ENCODE measurements at regions of chr1 and their contacts with region 1.

Region 1: GRCh38 chr1:28668191-28668955 is at the start of gene GMEB1:
- H3K4me3 ChIP-seq: peak within 1 kb of the TSS; percentile 75
- H3K27ac ChIP-seq: peak within 1 kb of the TSS; percentile 95
- H3K4me1 ChIP-seq: peaks cover 4% of the 10 kb centered on the region; the same call in 1 of the 2 replicates
- CTCF ChIP-seq: no peak

Region 2: DNA sequence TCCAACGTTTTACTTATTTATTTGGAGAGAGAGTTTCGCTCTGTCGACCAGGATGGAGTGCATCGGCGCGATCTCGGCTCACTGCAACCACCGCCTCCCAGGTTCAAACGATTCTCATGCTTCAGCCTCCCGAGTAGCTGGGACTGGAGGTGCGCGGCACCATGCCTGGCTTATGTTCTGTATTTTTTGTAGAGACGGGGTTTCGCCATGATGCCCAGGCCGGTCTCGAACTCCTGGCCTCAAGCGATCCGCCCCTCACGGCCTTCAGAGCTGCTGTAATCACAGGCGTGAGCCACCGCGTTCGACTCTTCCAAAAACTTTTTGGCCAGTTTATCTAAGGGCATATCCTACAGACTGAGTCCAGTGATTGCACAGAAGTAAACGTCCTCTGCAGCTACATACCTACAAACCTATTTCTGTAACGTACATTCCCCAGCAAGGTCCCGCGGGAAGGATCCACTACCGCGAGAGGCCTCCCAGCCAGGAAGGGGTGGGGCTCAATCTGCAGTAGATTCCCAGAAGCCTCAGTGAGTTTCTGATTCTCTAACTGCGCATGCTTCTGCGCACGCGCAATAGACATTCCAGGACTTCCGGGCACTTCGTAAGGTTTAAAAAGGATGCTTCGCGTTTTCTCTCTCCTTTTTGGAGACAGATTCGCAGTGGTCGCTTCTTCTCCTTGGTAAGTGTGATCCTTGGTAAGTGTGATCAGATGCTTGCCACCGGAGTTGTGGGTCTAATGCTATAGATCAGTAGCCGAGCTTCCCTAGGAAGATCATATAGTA is 162.8 kb before region 1 on chr1 and contains the start of gene RCC1:
- CTCF ChIA-PET with region 1: no interaction called
- POLR2A ChIA-PET with region 1: no interaction called
- H3K4me3 ChIP-seq: peak within 1 kb of the TSS; percentile 79
- H3K27ac ChIP-seq: peak within 1 kb of the TSS; percentile 86
- H3K4me1 ChIP-seq: no peaks in the 10 kb centered on the region; the same call in 1 of the 2 replicates
- CTCF ChIP-seq: no peak

Region 3: GRCh38 chr1:28642847-28643635 is 25.3 kb before region 1 on chr1 and contains the start of gene TAF12:
- CTCF ChIA-PET with region 1: no interaction called
- POLR2A ChIA-PET with region 1: interaction called, 30 read pairs
- H3K4me3 ChIP-seq: peak within 1 kb of the TSS; percentile 75
- H3K27ac ChIP-seq: peak within 1 kb of the TSS; percentile 65
- H3K4me1 ChIP-seq: no peaks in the 10 kb centered on the region; the same call in 1 of the 2 replicates
- CTCF ChIP-seq: peak; percentile 95

Region 4: DNA sequence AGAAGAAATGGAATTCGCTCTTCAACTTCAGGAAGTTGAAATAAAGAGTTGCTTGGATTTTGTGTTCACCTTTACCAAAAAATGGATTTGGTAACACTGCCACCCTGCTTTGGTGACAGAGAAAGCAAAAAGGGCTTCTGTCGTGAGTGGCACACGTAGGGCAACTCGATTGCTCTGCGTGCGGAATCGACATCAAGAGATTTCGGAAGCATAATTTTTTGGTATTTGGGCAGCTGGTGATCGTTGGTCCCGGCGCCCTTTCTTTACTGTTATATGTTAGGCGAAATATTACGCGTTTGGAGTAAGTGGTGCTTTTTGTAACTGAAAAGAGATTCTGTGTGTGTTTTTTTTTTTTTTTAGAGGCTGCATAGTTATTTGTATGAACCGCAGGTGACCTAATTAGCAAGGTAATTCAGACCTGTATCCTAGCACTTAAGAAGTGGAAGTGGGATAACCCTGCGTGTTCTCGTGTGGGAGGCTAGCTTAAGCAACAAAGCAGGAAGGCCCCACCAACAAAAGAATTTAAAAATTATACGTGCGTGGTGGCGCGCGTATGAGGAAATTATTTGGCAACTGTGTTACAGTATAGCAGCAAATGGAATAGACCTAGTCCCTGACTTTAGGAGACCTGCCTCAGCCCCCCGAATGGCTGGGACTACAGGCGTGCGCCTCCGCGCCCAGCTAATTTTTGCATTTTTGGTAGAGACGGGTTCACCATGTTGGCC is 19.7 kb before region 1 on chr1 and contains the start of gene RNU11:
- CTCF ChIA-PET with region 1: no interaction called
- POLR2A ChIA-PET with region 1: interaction called, 30 read pairs
- H3K4me3 ChIP-seq: peak within 1 kb of the TSS; percentile 40
- H3K27ac ChIP-seq: peak within 1 kb of the TSS; percentile 95
- H3K4me1 ChIP-seq: no peaks in the 10 kb centered on the region
- CTCF ChIP-seq: peak; percentile 28; the same call in 1 of the 2 replicates

Measured in HEK293 (cell line).